Mammary epithelial cell (primary cell): ENCODE measurements at regions of chr7 and their contacts with region 1.

Region 1: DNA sequence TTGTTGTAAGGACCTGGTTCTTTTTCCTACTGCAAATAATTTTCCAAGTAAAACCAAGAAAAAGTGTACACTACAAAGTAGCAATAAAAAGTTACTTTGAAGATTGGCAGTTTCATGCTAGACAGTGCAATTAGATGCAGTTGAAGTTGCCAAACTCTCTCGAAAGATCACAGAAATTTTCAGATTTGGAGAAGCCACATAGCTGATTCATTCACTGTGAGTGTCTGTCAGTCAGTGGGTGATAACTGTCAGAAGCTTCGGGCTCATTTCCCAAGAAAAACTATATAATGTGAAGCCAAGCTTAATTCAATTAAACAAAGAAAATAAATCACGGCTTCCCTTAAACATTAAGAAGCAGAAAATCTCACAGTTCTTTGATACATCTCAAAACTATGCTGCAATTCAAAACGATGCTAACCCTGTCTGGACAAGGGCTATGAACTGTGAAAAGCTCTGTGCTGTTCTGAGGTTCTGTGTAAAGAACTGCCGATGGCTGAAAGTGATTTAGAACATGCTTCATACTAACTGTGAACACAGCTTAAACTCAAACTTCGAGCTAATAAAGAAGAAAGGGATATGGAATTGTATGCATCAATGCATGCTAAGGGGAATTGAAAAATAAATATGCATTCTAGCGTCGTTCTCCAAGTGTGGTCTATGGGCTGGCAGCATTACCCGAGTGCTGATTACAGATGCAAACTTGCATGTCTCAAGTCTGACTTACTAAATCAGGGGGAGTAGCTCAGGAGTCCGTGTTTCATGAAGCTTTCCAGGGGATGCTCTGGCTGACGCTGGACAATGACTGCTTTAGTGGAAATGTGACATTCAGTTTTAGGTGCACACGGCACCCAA is 557.4 kb downstream of the CALN1 start:
- DNase-seq: no peak
- H3K4me3 ChIP-seq: no peak overlapping the region
- H3K27ac ChIP-seq: no peak overlapping the region
- H3K4me1 ChIP-seq: no peaks in the 10 kb centered on the region
- H3K27me3 ChIP-seq: no peaks in the 10 kb centered on the region
- CTCF ChIP-seq: no peak

Region 2: GRCh38 chr7:71026680-71027079 is 828.1 kb before region 1 on chr7:
- CTCF ChIA-PET with region 1: no interaction called
- dilution Hi-C with region 1: no loop called
- in situ Hi-C with region 1: no loop called
- intact Hi-C with region 1: no loop called
- DNase-seq: no peak
- H3K4me3 ChIP-seq: no peak overlapping the region
- H3K27ac ChIP-seq: no peak overlapping the region
- H3K4me1 ChIP-seq: no peaks in the 10 kb centered on the region
- H3K27me3 ChIP-seq: no peaks in the 10 kb centered on the region
- CTCF ChIP-seq: no peak

Region 3: GRCh38 chr7:71784180-71784579 is 70.6 kb before region 1 on chr7:
- CTCF ChIA-PET with region 1: no interaction called
- dilution Hi-C with region 1: loop called (anchors 5 kb)
- in situ Hi-C with region 1: no loop called
- intact Hi-C with region 1: no loop called
- DNase-seq: no peak
- H3K4me3 ChIP-seq: no peak overlapping the region
- H3K27ac ChIP-seq: no peak overlapping the region
- H3K4me1 ChIP-seq: no peaks in the 10 kb centered on the region
- H3K27me3 ChIP-seq: no peaks in the 10 kb centered on the region
- CTCF ChIP-seq: no peak

Region 4: GRCh38 chr7:72101444-72101843 is 246.7 kb after region 1 on chr7:
- CTCF ChIA-PET with region 1: no interaction called
- dilution Hi-C with region 1: no loop called
- in situ Hi-C with region 1: no loop called
- intact Hi-C with region 1: no loop called
- DNase-seq: no peak
- H3K4me3 ChIP-seq: no peak overlapping the region
- H3K27ac ChIP-seq: no peak overlapping the region
- H3K4me1 ChIP-seq: no peaks in the 10 kb centered on the region
- H3K27me3 ChIP-seq: no peaks in the 10 kb centered on the region
- CTCF ChIP-seq: no peak